Transverse colon (tissue), 4 donors: ENCODE measurements at regions of chr19 and their contacts with region 1.

Region 1: GRCh38 chr19:56140583-56141416 is at the start of gene ZNF444:
- DNase-seq: peak; percentile 100
- H3K4me3 ChIP-seq: peak within 1 kb of the TSS; percentile 36 to 64 (median 55)
- H3K27ac ChIP-seq: peak within 1 kb of the TSS; percentile 88 to 93 (median 91)
- H3K4me1 ChIP-seq: peaks cover 0 to 50% (median 29%) of the 10 kb centered on the region in 4 donors
- H3K27me3 ChIP-seq: no peaks in the 10 kb centered on the region
- CTCF ChIP-seq: no peak
- EP300 ChIP-seq: no peak
- POLR2A ChIP-seq: peak; percentile 27
- total RNA-seq, gene ZNF444: 20.7 to 148 (median 39.2) TPM

Region 2: DNA sequence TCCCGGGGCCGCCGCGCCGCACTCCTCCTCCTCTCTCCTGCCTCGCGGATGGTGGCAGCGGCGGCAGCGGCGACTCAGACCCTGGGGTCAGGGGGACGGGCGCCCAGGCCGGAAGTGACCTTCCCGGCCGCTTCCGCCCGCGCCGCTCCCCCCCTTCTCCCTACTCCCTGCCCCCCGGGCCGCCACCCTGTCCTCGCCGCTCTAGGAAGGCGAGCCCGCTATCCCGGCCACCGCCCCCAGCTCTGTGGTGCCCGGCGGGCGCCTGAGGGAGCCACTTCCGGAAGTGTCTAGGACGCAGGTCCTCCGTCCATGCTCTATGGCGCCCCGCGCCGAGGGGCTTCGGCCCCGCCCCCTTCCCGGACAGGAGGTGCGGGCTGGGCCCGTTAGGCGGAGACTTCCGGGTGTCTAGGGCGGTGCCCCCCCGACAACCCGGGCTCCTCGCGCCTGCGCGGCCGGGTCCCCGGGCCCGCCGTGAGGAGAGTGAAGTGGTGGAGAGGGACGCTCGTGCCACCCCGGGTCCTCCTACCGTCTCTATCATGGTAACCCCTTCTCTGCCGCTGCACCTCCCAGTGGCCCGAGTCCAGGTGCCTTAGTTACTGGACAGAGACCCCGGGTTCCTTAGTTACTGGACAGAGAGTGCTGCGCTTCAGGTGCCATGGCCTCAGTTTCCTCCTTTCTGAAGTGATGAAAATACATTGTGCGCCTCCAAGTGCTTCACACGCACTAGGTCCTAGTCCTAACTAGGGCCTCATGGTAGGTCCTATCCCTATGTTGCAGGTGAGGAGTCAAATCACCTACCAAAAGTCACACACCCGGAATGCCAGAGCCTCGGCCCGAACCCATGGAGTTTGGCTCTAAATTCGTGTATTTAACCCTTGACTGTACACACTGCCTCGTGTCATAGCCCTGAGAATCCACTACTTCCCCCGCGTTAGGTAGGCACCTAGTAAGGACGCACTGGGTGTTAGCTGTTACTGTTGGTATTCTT is 19.3 kb before region 1 on chr19 and contains the start of gene ZNF787:
- in situ Hi-C with region 1: no loop called
- intact Hi-C with region 1: loop called (anchors 1 kb)
- DNase-seq: peak; percentile 99
- H3K4me3 ChIP-seq: peak within 1 kb of the TSS; percentile 73 to 86 (median 84)
- H3K27ac ChIP-seq: peak within 1 kb of the TSS; percentile 94 to 98 (median 96)
- H3K4me1 ChIP-seq: peaks cover 26 to 53% (median 48%) of the 10 kb centered on the region in 4 donors
- H3K27me3 ChIP-seq: no peaks in the 10 kb centered on the region
- CTCF ChIP-seq: no peak
- EP300 ChIP-seq: peak; percentile 50
- POLR2A ChIP-seq: peak; percentile 58
- total RNA-seq, gene ZNF787: 24.9 to 53.1 (median 27.4) TPM